GM12878 (cell line): ENCODE measurements at regions of chr1 and their contacts with region 1.

Region 1: DNA sequence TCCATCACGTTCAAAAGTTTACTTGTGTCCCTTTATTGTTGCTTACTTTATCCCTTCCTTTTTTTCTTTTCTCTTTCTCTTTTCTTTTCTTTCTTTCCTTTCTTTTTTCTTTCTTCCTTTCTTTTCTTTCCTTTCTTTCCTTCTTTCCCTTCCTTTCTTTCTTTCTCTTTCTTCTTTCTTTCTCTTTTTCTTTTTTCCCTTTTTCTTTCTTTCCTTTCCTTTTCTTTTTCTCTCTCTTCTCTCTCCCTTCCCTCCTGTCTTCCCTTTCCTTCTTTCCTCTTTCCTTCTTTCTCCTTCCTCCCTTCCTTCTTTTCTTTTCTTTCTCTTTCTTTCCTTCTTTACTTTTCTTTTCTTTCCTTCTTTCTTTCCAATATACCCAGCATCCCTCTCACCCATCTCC is 391.2 kb downstream of the DPYD start:
- DNase-seq: no peak
- ATAC-seq: no peak
- H3K4me3 ChIP-seq: no peak overlapping the region
- H3K27ac ChIP-seq: no peak overlapping the region
- H3K4me1 ChIP-seq: no peaks in the 10 kb centered on the region
- H3K27me3 ChIP-seq: no peaks in the 10 kb centered on the region
- CTCF ChIP-seq: no peak
- EP300 ChIP-seq: no peak
- POLR2A ChIP-seq: no peak
- RAD21 ChIP-seq: no peak

Region 2: GRCh38 chr1:97461782-97462181 is 67.8 kb before region 1 on chr1:
- CTCF ChIA-PET with region 1: interaction called, 4 read pairs
- POLR2A ChIA-PET with region 1: no interaction called
- RAD21 ChIA-PET with region 1: interaction called, 7 read pairs
- SMC1A ChIA-PET with region 1: interaction called, 3 read pairs
- in situ Hi-C with region 1: no loop called
- intact Hi-C with region 1: loop called (anchors 5 kb)
- DNase-seq: peak; percentile 59
- ATAC-seq: peak; percentile 95
- H3K4me3 ChIP-seq: no peak overlapping the region
- H3K27ac ChIP-seq: peak overlapping the region; percentile 36; the same call in 1 of the 2 replicates
- H3K4me1 ChIP-seq: peaks cover 8% of the 10 kb centered on the region; the same call in 1 of the 2 replicates
- H3K27me3 ChIP-seq: no peaks in the 10 kb centered on the region
- CTCF ChIP-seq: no peak
- EP300 ChIP-seq: peak; percentile 78 to 95
- POLR2A ChIP-seq: no peak
- RAD21 ChIP-seq: no peak

Region 3: DNA sequence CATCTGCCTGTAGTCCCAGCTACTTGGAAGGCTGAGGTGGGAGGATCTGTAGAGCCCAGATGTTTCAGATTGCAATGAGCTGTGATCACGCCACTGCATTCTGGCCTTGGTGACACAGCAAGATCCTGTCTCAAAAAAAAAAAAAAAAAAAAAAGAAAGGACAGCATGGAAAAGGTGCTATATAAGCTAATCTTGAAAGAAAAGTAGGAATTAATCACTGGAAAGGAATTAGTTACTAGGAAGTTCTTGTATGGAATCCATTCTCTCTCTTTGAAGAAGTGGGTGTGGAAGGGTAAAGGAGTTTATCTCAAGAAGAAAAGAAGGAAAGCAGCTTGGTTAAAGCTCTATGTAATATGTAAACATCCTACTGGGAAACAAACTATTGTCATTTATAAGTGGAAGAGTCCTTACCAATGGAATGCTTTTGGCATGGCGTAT is 52.0 kb after region 1 on chr1:
- CTCF ChIA-PET with region 1: no interaction called
- POLR2A ChIA-PET with region 1: no interaction called
- RAD21 ChIA-PET with region 1: no interaction called
- SMC1A ChIA-PET with region 1: no interaction called
- in situ Hi-C with region 1: no loop called
- intact Hi-C with region 1: no loop called
- DNase-seq: no peak
- ATAC-seq: no peak
- H3K4me3 ChIP-seq: no peak overlapping the region
- H3K27ac ChIP-seq: no peak overlapping the region
- H3K4me1 ChIP-seq: no peaks in the 10 kb centered on the region
- H3K27me3 ChIP-seq: no peaks in the 10 kb centered on the region
- CTCF ChIP-seq: no peak
- EP300 ChIP-seq: no peak
- POLR2A ChIP-seq: no peak
- RAD21 ChIP-seq: no peak

Region 4: DNA sequence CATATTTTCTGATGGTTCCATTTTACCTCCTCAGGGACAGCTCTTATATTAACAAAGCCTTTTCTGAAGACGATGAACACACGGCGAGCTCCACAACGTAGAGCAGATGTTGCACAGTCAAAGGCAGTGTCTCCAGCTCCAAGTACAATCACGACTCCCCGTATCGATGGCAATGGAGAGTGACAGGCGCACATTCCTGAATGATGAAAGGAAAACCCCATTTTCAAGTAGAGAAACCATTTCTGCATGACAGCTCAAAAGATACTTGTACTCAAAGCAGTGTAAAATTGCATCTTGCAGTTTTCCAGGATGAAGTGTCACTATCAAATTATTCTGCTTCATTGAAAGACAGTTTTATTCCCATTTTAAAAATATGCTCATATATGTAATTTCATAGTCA is 63.6 kb after region 1 on chr1:
- CTCF ChIA-PET with region 1: no interaction called
- POLR2A ChIA-PET with region 1: no interaction called
- RAD21 ChIA-PET with region 1: no interaction called
- SMC1A ChIA-PET with region 1: no interaction called
- in situ Hi-C with region 1: no loop called
- intact Hi-C with region 1: no loop called
- DNase-seq: no peak
- ATAC-seq: no peak
- H3K4me3 ChIP-seq: no peak overlapping the region
- H3K27ac ChIP-seq: no peak overlapping the region
- H3K4me1 ChIP-seq: no peaks in the 10 kb centered on the region
- H3K27me3 ChIP-seq: no peaks in the 10 kb centered on the region
- CTCF ChIP-seq: no peak
- EP300 ChIP-seq: no peak
- POLR2A ChIP-seq: no peak
- RAD21 ChIP-seq: no peak